CD4-positive, alpha-beta memory T cell (primary cell): ENCODE measurements at regions of chr3 and their contacts with region 1.

Region 1: GRCh38 chr3:45665101-45665572 is 24.1 kb upstream of the SACM1L start:
- DNase-seq: peak; percentile 76 to 84 (median 79)
- H3K4me3 ChIP-seq: peak overlapping the region; percentile 70
- H3K4me3 Mint-ChIP-seq: peak overlapping the region; percentile 87 to 98 (median 92)
- H3K27ac ChIP-seq: peak overlapping the region; percentile 66
- H3K27ac Mint-ChIP-seq: peak overlapping the region; percentile 89 to 98 (median 95)
- H3K4me1 ChIP-seq: peaks cover 22% of the 10 kb centered on the region
- H3K4me1 Mint-ChIP-seq: peaks cover 15 to 36% (median 25%) of the 10 kb centered on the region in 4 donors
- H3K27me3 ChIP-seq: no peaks in the 10 kb centered on the region
- H3K27me3 Mint-ChIP-seq: no peaks in the 10 kb centered on the region

Region 2: DNA sequence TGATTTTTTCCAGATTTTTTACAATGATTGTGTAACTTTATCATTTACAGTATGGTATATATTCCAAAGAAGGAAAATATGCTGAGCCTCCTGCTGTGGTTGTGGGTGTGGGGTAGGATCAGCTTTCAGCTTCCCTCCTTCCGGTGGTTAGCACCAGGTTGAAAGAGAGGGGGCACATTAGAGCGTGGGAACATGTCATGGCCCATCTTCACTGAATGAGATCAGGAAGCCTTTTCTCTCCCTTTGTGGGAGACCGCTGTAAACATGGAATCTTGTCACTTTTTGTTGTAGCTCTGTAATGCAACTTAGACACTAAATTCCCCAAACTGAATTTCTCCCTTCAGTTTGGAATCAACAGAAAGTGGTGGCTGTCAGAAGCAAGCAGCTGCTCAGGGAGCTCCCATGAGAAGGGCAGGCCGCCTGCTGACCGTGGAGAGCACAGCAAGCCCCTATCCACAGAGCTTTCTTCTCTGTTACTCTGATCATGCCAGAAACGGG is 157.3 kb before region 1 on chr3:
- CTCF ChIA-PET with region 1: interaction called, 471 read pairs
- POLR2A ChIA-PET with region 1: interaction called, 3 read pairs
- intact Hi-C with region 1: loop called (anchors 2 kb)
- DNase-seq: no peak
- H3K4me3 ChIP-seq: no peak overlapping the region
- H3K4me3 Mint-ChIP-seq: no peak overlapping the region
- H3K27ac ChIP-seq: no peak overlapping the region
- H3K27ac Mint-ChIP-seq: no peak overlapping the region
- H3K4me1 ChIP-seq: peaks cover 10% of the 10 kb centered on the region
- H3K4me1 Mint-ChIP-seq: peaks cover 0 to 4% (median 2%) of the 10 kb centered on the region in 4 donors
- H3K27me3 ChIP-seq: no peaks in the 10 kb centered on the region
- H3K27me3 Mint-ChIP-seq: no peaks in the 10 kb centered on the region

Region 3: DNA sequence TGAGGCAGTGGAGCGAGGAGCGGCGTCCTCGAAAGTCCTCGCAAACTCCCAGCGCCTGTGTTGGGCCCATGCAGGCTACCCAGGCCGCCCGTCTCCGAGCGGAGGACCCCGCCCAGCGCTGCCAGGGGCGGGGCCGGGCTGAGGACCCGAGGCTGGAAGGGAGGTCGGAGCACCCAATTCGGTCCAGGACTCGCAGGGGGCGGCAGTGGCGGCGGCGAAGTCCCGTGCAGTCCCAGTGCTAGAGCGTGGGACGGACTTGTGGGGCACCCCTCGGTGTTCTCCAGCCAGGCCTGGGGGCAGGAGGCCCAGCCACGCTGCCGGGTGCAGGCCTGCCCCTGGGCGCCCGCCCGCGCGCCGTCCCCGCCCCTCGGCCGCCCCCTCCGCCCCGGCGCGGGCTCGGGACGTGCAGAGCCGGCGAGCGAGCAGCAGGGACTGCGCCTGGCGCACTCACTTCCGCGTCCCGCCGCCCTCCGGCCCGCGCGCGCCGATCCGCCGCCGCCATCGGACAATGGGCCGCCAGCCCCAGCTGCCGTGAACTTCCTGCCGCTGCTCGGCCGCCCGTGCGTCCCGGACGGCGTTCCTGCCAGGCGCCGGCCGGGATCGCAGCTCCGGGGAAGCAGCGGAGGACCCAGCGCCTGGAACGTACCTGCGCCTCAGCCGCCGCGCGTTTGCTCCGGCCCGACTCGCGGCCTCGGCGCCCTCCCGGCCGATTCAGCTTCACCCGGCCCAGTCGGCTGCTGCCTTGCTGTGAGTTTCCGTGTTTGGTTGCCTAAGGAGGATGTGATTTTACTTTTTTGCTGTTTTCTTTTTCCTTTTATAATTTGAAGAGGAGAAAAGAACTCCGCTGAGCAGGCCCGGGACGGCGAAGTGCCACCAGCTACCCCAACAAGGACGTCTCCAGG is 71.2 kb before region 1 on chr3:
- CTCF ChIA-PET with region 1: interaction called, 42 read pairs
- POLR2A ChIA-PET with region 1: interaction called, 6 read pairs
- intact Hi-C with region 1: loop called (anchors 1 kb)
- DNase-seq: peak; percentile 61 to 78 (median 67)
- H3K4me3 ChIP-seq: peak overlapping the region; percentile 70 to 76
- H3K4me3 Mint-ChIP-seq: peak overlapping the region; percentile 89 to 99 (median 94)
- H3K27ac ChIP-seq: peak overlapping the region; percentile 58
- H3K27ac Mint-ChIP-seq: peak overlapping the region; percentile 81 to 98 (median 90)
- H3K4me1 ChIP-seq: peaks cover 59% of the 10 kb centered on the region
- H3K4me1 Mint-ChIP-seq: peaks cover 42 to 60% (median 52%) of the 10 kb centered on the region in 4 donors
- H3K27me3 ChIP-seq: no peaks in the 10 kb centered on the region
- H3K27me3 Mint-ChIP-seq: no peaks in the 10 kb centered on the region

Region 4: DNA sequence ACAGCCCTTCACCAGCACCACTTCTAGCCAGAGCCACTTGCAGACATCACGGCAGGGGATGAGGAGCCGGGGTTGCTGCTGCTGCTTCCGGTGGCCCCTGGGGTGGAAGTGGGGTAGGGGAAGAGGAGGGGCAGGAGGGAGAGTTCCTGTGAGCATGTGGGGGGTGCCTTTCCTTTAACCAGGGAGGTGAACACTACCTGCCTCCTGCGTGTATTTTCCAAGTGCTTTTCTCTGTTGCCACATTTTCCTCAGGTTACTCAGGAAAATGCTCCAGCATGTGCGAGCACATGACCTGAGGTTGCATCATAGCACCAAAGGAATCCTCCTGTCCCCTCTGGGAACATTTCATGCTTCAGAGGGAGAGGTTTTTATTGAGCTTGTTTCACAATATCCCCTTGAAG is 11.9 kb after region 1 on chr3:
- CTCF ChIA-PET with region 1: interaction called, 29 read pairs
- POLR2A ChIA-PET with region 1: interaction called, 18 read pairs
- intact Hi-C with region 1: no loop called
- DNase-seq: peak; percentile 62 to 79 (median 69)
- H3K4me3 ChIP-seq: peak overlapping the region in 1 of 2 donors; percentile 20
- H3K4me3 Mint-ChIP-seq: peak overlapping the region; percentile 38 to 85 (median 80)
- H3K27ac ChIP-seq: peak overlapping the region; percentile 57
- H3K27ac Mint-ChIP-seq: peak overlapping the region; percentile 92 to 97 (median 94)
- H3K4me1 ChIP-seq: peaks cover 27% of the 10 kb centered on the region
- H3K4me1 Mint-ChIP-seq: peaks cover 12 to 26% (median 17%) of the 10 kb centered on the region in 4 donors
- H3K27me3 ChIP-seq: no peaks in the 10 kb centered on the region
- H3K27me3 Mint-ChIP-seq: no peaks in the 10 kb centered on the region

Region 5: GRCh38 chr3:45688882-45689756 is 24.0 kb after region 1 on chr3 and contains the start of gene SACM1L:
- CTCF ChIA-PET with region 1: interaction called, 53 read pairs
- POLR2A ChIA-PET with region 1: interaction called, 23 read pairs
- intact Hi-C with region 1: loop called (anchors 1 kb)
- DNase-seq: peak; percentile 96 to 97 (median 97)
- H3K4me3 ChIP-seq: peak within 1 kb of the TSS; percentile 84 to 97
- H3K4me3 Mint-ChIP-seq: peak within 1 kb of the TSS; percentile 86 to 99 (median 93)
- H3K27ac ChIP-seq: peak within 1 kb of the TSS; percentile 94
- H3K27ac Mint-ChIP-seq: peak within 1 kb of the TSS; percentile 91 to 100 (median 99)
- H3K4me1 ChIP-seq: peaks cover 47% of the 10 kb centered on the region
- H3K4me1 Mint-ChIP-seq: peaks cover 41 to 67% (median 56%) of the 10 kb centered on the region in 4 donors
- H3K27me3 ChIP-seq: no peaks in the 10 kb centered on the region
- H3K27me3 Mint-ChIP-seq: peaks cover 2 to 5% of the 10 kb centered on the region in 2 donors
- total RNA-seq, gene SACM1L: 95.7 to 104 TPM

Region 6: GRCh38 chr3:45701172-45701867 is 36.2 kb after region 1 on chr3:
- CTCF ChIA-PET with region 1: interaction called, 19 read pairs
- POLR2A ChIA-PET with region 1: no interaction called
- intact Hi-C with region 1: loop called (anchors 5 kb)
- DNase-seq: no peak
- H3K4me3 ChIP-seq: no peak overlapping the region
- H3K4me3 Mint-ChIP-seq: peak overlapping the region in 1 of 8 donors; percentile 41
- H3K27ac ChIP-seq: no peak overlapping the region
- H3K27ac Mint-ChIP-seq: peak overlapping the region in 4 of 7 donors; percentile 19 to 58 (median 44)
- H3K4me1 ChIP-seq: peaks cover 56% of the 10 kb centered on the region
- H3K4me1 Mint-ChIP-seq: peaks cover 36 to 76% (median 57%) of the 10 kb centered on the region in 4 donors
- H3K27me3 ChIP-seq: no peaks in the 10 kb centered on the region
- H3K27me3 Mint-ChIP-seq: no peaks in the 10 kb centered on the region

Region 7: GRCh38 chr3:45929042-45929679 is 264.0 kb after region 1 on chr3:
- CTCF ChIA-PET with region 1: interaction called, 10 read pairs
- POLR2A ChIA-PET with region 1: no interaction called
- intact Hi-C with region 1: loop called (anchors 2 kb)
- DNase-seq: peak; percentile 55 to 64 (median 56)
- H3K4me3 ChIP-seq: no peak overlapping the region
- H3K4me3 Mint-ChIP-seq: no peak overlapping the region
- H3K27ac ChIP-seq: no peak overlapping the region
- H3K27ac Mint-ChIP-seq: peak overlapping the region in 3 of 7 donors; percentile 22 to 68 (median 53)
- H3K4me1 ChIP-seq: no peaks in the 10 kb centered on the region
- H3K4me1 Mint-ChIP-seq: peaks cover 5 to 23% (median 9%) of the 10 kb centered on the region in 4 donors
- H3K27me3 ChIP-seq: no peaks in the 10 kb centered on the region
- H3K27me3 Mint-ChIP-seq: no peaks in the 10 kb centered on the region